ENCODE measurements at regions of chr17 and their contacts with region 1.

Region 1: GRCh38 chr17:74212913-74213791 is at the start of gene TTYH2:
- DNase-seq: peak; percentile 82
- ATAC-seq: peak; percentile 62
- H3K4me3 Mint-ChIP-seq: peak within 1 kb of the TSS; percentile 74
- H3K27ac Mint-ChIP-seq: peak within 1 kb of the TSS; percentile 75
- H3K4me1 Mint-ChIP-seq: peaks cover 61% of the 10 kb centered on the region
- H3K27me3 Mint-ChIP-seq: no peaks in the 10 kb centered on the region
- total RNA-seq, gene TTYH2: 2.7 to 3.4 TPM

Region 2: DNA sequence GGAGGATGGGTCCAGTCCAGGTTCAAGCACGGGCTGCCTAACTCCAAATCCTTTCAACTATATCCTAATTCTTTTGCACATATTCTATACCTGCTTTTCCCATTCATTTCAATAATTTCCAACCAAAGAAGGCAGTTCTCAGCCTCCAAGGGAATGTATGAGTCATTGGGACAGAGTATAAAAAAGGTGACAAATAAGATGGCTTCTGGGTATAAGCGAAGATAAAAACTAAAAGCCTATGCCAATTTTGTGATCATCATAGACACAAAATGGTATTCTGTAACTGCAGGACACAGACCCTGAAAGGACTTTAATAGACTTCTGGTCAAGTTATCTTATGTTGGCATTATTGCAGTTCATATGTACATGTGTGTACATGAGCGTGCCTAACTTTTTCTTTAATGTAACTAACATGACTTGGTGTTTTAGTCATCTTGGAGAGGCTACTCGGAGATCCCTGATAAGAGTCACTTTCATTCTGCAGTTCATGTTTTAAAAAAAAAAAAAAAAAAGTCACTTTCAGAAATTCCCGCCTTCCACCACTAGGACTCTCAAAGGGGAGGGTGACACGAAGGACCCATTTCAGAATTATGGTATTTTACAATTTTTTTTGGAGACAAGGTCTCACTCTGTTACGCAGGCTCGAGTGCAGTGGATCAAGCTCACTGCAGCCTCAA is 1003.0 kb before region 1 on chr17:
- CTCF ChIA-PET with region 1: no interaction called
- POLR2A ChIA-PET with region 1: no interaction called
- intact Hi-C with region 1: loop called in 1 of 2 experiments (anchors 5 kb)
- DNase-seq: no peak
- ATAC-seq: peak; percentile 42
- H3K4me3 Mint-ChIP-seq: no peak overlapping the region
- H3K27ac Mint-ChIP-seq: peak overlapping the region; percentile 69
- H3K4me1 Mint-ChIP-seq: peaks cover 24% of the 10 kb centered on the region
- H3K27me3 Mint-ChIP-seq: no peaks in the 10 kb centered on the region

Region 3: GRCh38 chr17:74280093-74280513 is 67.0 kb after region 1 on chr17:
- CTCF ChIA-PET with region 1: interaction called, 3 read pairs
- POLR2A ChIA-PET with region 1: no interaction called
- intact Hi-C with region 1: loop called in 1 of 2 experiments (anchors 5 kb)
- DNase-seq: peak; percentile 75
- ATAC-seq: peak; percentile 80
- H3K4me3 Mint-ChIP-seq: no peak overlapping the region
- H3K27ac Mint-ChIP-seq: peak overlapping the region; percentile 74
- H3K4me1 Mint-ChIP-seq: peaks cover 38% of the 10 kb centered on the region
- H3K27me3 Mint-ChIP-seq: no peaks in the 10 kb centered on the region

Region 4: GRCh38 chr17:74296548-74296936 is 83.4 kb after region 1 on chr17:
- CTCF ChIA-PET with region 1: interaction called, 4 read pairs
- POLR2A ChIA-PET with region 1: interaction called, 3 read pairs
- intact Hi-C with region 1: loop called (anchors 1 to 5 kb)
- DNase-seq: peak; percentile 59
- ATAC-seq: peak; percentile 24
- H3K4me3 Mint-ChIP-seq: no peak overlapping the region
- H3K27ac Mint-ChIP-seq: no peak overlapping the region
- H3K4me1 Mint-ChIP-seq: peaks cover 23% of the 10 kb centered on the region
- H3K27me3 Mint-ChIP-seq: peaks cover 5% of the 10 kb centered on the region

Region 5: GRCh38 chr17:74354123-74354522 is 141.0 kb after region 1 on chr17:
- CTCF ChIA-PET with region 1: interaction called, 3 read pairs
- POLR2A ChIA-PET with region 1: no interaction called
- intact Hi-C with region 1: loop called (anchors 1 to 5 kb)
- DNase-seq: peak; percentile 88
- ATAC-seq: peak; percentile 90
- H3K4me3 Mint-ChIP-seq: no peak overlapping the region
- H3K27ac Mint-ChIP-seq: no peak overlapping the region
- H3K4me1 Mint-ChIP-seq: no peaks in the 10 kb centered on the region
- H3K27me3 Mint-ChIP-seq: peaks cover 53% of the 10 kb centered on the region

Region 6: DNA sequence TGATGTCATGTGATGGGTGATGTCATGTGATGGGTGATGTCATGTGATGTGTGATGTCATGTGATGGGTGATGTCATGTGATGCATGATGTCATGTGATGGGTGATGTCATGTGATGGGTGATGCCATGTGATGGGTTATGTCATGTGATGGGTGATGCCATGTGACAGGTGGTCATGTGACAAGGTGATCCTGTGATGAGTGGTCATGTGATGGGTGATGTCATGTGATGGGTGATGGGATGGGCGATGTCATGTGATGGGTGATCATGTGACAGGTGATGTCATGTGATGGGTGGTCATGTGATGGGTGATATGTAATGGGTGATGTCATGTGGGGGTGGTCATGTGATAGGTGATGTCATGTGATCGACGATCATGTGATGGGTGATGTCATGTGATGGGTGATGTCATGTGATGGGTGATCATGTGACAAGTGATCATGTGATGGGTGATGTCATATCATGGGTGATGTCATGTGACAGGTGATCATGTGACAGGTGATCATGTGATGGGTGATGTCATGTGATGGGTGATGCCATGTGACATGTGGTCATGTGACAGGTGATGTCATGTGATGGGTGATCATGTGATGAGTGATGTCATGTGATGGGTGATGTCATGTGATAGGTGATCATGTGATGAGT is 301.0 kb after region 1 on chr17:
- CTCF ChIA-PET with region 1: no interaction called
- POLR2A ChIA-PET with region 1: no interaction called
- intact Hi-C with region 1: loop called in 1 of 2 experiments (anchors 5 kb)
- DNase-seq: peak; percentile 78
- ATAC-seq: peak; percentile 17
- H3K4me3 Mint-ChIP-seq: peak overlapping the region; percentile 72
- H3K27ac Mint-ChIP-seq: peak overlapping the region; percentile 95
- H3K4me1 Mint-ChIP-seq: peaks cover 31% of the 10 kb centered on the region
- H3K27me3 Mint-ChIP-seq: peaks cover 14% of the 10 kb centered on the region

Region 7: DNA sequence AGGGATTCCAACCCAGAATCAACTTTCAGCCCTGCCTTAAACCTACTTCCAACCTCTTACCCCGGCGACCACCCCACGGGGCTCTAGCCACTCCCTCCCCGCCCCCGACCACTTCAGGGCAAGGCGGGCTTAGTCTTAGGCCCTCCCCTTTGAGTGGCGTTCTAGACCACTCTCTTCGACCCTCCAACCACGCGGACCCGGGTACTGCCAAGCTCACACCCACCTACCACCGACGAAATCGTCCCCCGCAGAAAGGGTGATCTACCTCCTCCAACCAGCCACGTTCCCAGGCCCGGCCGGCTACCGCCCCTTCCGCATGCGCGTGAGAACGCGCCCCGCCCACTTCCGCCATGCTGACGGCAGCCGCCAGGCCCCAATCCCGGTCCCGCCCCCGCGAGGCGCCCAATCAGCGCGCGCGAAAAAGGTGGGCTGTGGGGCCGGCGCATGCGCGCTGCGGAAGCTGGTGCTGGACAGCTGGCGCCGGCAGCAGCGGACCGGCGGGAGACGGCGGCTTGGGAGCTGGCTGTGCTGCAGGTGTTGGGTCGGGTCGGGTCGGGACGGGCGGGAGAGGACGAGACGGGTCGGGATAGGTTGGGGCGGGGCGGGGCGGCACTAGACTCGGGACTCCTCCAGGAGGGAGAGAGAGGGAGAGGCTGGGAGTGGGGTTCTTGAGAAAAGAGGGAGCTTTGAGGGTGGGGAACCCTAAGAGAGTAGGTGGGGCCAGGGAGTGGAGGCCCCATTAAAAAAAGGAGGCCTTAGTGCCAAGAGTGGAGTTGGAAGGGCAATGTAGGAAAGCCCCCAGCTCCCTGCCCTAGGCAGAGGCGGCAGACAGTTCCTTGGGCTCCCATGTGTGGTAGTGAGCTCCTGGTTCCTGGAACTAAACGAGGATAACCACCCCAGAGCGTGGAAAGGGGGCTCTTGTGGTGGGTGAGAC is 563.2 kb after region 1 on chr17 and contains the start of gene NAT9:
- CTCF ChIA-PET with region 1: no interaction called
- POLR2A ChIA-PET with region 1: no interaction called
- intact Hi-C with region 1: loop called in 1 of 2 experiments (anchors 5 kb)
- DNase-seq: peak; percentile 100
- ATAC-seq: peak; percentile 76
- H3K4me3 Mint-ChIP-seq: peak within 1 kb of the TSS; percentile 98
- H3K27ac Mint-ChIP-seq: peak within 1 kb of the TSS; percentile 94
- H3K4me1 Mint-ChIP-seq: peaks cover 59% of the 10 kb centered on the region
- H3K27me3 Mint-ChIP-seq: no peaks in the 10 kb centered on the region
- total RNA-seq, gene NAT9: 23.7 to 39.6 TPM

Measured in activated CD4-positive, alpha-beta T cell treated with anti-CD3 and anti-CD28 coated beads for 36 hours (primary cell).